ENCODE measurements at regions of chr14 and their contacts with region 1.

Region 1: DNA sequence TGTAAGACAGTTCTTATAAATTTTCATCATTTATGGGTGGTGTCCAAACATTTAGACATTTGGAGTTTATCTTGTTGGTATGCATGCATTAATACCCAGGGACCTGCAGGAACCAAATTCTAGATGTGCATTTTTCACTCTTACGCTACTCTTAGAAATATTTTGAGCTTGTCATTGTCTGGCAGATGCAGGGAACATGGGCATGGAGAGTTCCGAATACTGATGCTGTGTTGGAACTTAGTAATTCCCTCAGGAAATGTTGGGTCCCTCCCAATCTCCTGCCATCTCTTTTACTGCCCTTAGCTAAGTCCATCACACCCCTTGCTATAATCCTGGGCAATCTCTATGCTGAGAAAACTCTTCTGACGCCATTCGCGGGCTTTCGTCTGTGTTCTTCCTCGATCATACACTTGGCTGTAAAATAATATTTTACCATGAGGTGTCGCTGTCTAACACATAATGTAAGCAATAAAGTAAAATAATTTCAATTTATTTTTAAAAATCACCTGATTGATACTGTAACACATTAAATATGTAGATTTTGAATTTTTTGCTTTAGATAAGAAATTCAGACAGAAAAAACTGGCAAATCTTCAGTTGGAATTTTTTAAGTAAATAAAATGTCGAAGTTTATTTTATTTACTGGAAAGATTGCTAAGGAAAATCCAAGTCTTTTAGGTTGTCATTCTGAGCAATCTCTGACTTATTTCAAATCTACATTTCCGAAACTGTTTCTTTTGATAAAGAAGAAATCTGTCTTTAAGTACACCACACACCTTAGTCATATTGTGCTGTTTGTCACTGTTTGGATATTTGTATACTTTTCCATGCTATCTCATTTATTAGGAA is 304.1 kb upstream of the SSTR1 start:
- DNase-seq: peak in 1 of 2 donors; percentile 67
- ATAC-seq: no peak
- H3K4me3 ChIP-seq: no peak overlapping the region
- H3K4me3 Mint-ChIP-seq: no peak overlapping the region
- H3K27ac ChIP-seq: no peak overlapping the region
- H3K27ac Mint-ChIP-seq: no peak overlapping the region
- H3K4me1 ChIP-seq: no peaks in the 10 kb centered on the region
- H3K4me1 Mint-ChIP-seq: peaks cover 5 to 6% of the 10 kb centered on the region in 2 donors
- H3K27me3 ChIP-seq: no peaks in the 10 kb centered on the region
- H3K27me3 Mint-ChIP-seq: peaks cover 13 to 29% of the 10 kb centered on the region in 2 donors
- CTCF ChIP-seq: peak; percentile 76

Region 2: DNA sequence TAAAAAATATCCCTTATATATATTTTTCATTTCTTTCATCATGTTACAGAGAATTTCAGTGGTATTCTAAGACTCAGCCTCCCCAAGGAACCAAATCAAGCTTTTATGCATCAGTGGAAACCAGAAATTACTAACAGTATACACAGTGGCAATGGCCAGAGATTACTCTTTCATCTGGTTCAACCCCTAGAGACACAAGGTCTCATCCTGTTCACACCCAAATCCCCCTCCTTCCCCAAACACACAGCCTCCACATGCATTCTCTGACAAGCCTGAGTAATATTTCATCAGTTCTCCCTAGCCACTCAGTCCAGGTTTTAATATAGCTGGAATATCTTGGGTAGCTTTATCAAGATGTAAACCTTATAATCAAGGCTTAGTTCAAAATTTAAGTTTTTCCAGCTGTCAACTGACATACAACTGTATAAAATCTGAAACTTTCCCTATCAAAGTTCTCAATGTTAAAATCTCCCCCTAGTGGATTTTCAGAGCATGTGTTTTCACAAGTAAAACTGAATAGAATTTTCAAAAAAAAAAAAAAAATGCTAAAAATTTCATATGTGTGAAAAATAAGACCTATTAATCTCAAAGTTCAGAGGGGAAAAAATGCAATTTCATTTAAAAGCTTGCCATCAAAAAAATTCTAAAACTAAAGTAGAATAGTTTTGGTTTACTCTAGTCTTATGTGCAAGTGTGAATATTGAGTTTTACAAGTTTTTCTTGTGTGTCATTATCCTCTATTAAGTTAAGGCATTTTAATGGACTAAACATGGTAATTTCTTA is 293.6 kb after region 1 on chr14:
- intact Hi-C with region 1: loop called (anchors 5 kb)
- DNase-seq: peak in 1 of 2 donors; percentile 34
- ATAC-seq: peak in 2 of 3 donors; percentile 53 to 58
- H3K4me3 ChIP-seq: no peak overlapping the region
- H3K4me3 Mint-ChIP-seq: no peak overlapping the region
- H3K27ac ChIP-seq: no peak overlapping the region
- H3K27ac Mint-ChIP-seq: no peak overlapping the region
- H3K4me1 ChIP-seq: no peaks in the 10 kb centered on the region
- H3K4me1 Mint-ChIP-seq: peaks cover 0 to 5% of the 10 kb centered on the region in 2 donors
- H3K27me3 ChIP-seq: no peaks in the 10 kb centered on the region
- H3K27me3 Mint-ChIP-seq: peaks cover 7 to 15% of the 10 kb centered on the region in 2 donors
- CTCF ChIP-seq: peak; percentile 74

Region 3: GRCh38 chr14:38867561-38868150 is 964.1 kb after region 1 on chr14:
- intact Hi-C with region 1: loop called (anchors 1 kb)
- DNase-seq: peak; percentile 18 to 76
- ATAC-seq: peak; percentile 57 to 72 (median 69)
- H3K4me3 ChIP-seq: no peak overlapping the region
- H3K4me3 Mint-ChIP-seq: no peak overlapping the region
- H3K27ac ChIP-seq: no peak overlapping the region
- H3K27ac Mint-ChIP-seq: no peak overlapping the region
- H3K4me1 ChIP-seq: no peaks in the 10 kb centered on the region
- H3K4me1 Mint-ChIP-seq: no peaks in the 10 kb centered on the region
- H3K27me3 ChIP-seq: no peaks in the 10 kb centered on the region
- H3K27me3 Mint-ChIP-seq: peaks cover 0 to 3% of the 10 kb centered on the region in 2 donors
- CTCF ChIP-seq: peak; percentile 65

Region 4: DNA sequence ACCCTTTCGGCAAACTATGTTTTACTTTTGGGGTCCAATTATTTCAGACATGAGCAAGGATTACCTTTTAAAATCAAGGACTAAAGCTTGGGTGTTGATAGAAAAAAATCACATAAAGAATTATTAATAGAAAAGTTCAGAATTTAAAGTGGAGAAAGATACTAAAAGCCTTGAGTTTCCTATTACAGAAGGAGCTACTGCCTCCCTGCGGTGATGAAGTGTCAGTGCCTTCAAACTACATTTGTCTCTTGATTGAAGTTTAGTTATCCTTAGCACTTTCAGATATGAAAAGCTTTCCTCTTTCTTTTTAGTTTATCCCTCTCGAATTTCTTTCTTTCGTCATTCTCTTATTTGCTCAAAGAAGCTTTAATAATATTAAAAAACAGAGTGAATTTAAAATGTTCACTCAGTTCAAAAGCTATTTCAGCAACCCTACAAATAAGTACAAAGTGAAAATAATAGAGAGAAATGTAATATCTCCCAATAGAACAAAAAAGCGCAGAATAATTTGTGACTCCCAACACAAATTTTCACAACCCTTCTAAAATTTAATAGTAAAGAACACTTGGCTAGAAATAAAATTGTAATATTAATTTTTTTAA is 1111.9 kb after region 1 on chr14:
- intact Hi-C with region 1: loop called (anchors 1 kb)
- DNase-seq: peak in 1 of 2 donors; percentile 55
- ATAC-seq: peak in 1 of 3 donors; percentile 61
- H3K4me3 ChIP-seq: no peak overlapping the region
- H3K4me3 Mint-ChIP-seq: no peak overlapping the region
- H3K27ac ChIP-seq: no peak overlapping the region
- H3K27ac Mint-ChIP-seq: no peak overlapping the region
- H3K4me1 ChIP-seq: no peaks in the 10 kb centered on the region
- H3K4me1 Mint-ChIP-seq: peaks cover 0 to 5% of the 10 kb centered on the region in 2 donors
- H3K27me3 ChIP-seq: no peaks in the 10 kb centered on the region
- H3K27me3 Mint-ChIP-seq: no peaks in the 10 kb centered on the region
- CTCF ChIP-seq: peak; percentile 69